ENCODE measurements at regions of chr11 and their contacts with region 1.

Region 1: DNA sequence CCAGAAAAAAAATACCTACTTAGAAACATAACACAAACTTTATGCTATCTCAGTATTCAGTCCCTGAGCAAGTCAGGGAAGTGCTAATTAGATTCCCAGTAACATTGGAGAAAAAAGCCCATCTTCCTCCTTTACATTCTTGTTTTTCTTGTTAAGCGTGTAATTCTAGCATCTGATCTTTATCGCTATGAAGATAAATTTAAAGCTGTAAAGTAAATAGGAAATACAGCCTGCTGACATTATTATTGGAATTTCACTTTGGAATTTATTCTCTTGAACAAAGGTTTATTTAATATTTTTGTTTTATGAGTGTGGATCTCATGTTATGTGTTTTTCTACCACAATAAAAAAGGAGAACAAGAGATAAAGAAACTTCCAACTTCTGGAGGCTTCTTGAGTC is 13.9 kb downstream of the ALKBH3 start:
- DNase-seq: no peak
- H3K4me3 ChIP-seq: no peak overlapping the region
- H3K4me3 Mint-ChIP-seq: no peak overlapping the region
- H3K27ac ChIP-seq: no peak overlapping the region
- H3K27ac Mint-ChIP-seq: no peak overlapping the region
- H3K4me1 ChIP-seq: no peaks in the 10 kb centered on the region
- H3K4me1 Mint-ChIP-seq: no peaks in the 10 kb centered on the region
- H3K27me3 ChIP-seq: no peaks in the 10 kb centered on the region
- H3K27me3 Mint-ChIP-seq: no peaks in the 10 kb centered on the region
- CTCF ChIP-seq: no peak

Region 2: DNA sequence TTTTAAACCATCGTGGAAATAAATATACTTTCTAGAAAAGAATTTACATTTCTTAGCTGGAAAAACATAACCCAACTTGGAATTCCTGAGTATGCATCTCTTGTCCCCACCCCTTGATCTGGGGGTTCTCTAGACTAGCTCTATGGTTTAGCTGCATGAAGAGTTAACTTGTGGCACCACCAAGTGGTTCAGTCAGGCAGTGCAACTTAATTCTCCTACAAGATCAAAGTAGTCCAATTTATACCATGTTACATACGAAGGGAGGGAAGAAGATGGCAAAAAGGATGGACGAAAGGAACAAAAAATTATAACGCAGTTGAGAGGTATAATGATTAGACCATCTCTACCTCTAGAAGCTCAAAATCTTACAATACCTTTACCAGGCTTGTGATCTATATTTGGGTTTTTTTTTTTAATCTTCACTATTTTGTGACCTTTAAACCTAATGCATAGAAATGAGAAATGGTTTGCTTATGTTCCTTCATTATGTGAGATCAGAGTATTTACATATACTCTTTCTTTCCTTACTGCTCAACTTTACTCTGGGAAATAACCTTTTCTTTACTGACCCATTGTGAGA is 42.4 kb before region 1 on chr11:
- intact Hi-C with region 1: no loop called
- DNase-seq: peak; percentile 30 to 57 (median 52)
- H3K4me3 ChIP-seq: no peak overlapping the region
- H3K4me3 Mint-ChIP-seq: no peak overlapping the region
- H3K27ac ChIP-seq: no peak overlapping the region
- H3K27ac Mint-ChIP-seq: no peak overlapping the region
- H3K4me1 ChIP-seq: no peaks in the 10 kb centered on the region
- H3K4me1 Mint-ChIP-seq: peaks cover 5% of the 10 kb centered on the region
- H3K27me3 ChIP-seq: no peaks in the 10 kb centered on the region
- H3K27me3 Mint-ChIP-seq: no peaks in the 10 kb centered on the region
- CTCF ChIP-seq: peak; percentile 89

Region 3: GRCh38 chr11:43944761-43945311 is 50.3 kb after region 1 on chr11:
- intact Hi-C with region 1: loop called in 1 of 2 experiments (anchors 5 kb)
- DNase-seq: peak; percentile 16 to 37 (median 21)
- H3K4me3 ChIP-seq: no peak overlapping the region
- H3K4me3 Mint-ChIP-seq: peak overlapping the region; percentile 39 to 94
- H3K27ac ChIP-seq: no peak overlapping the region
- H3K27ac Mint-ChIP-seq: no peak overlapping the region
- H3K4me1 ChIP-seq: peaks cover 15 to 34% of the 10 kb centered on the region in 2 donors
- H3K4me1 Mint-ChIP-seq: peaks cover 26% of the 10 kb centered on the region
- H3K27me3 ChIP-seq: peaks cover 31 to 43% of the 10 kb centered on the region in 2 donors
- H3K27me3 Mint-ChIP-seq: peaks cover 41 to 71% (median 68%) of the 10 kb centered on the region in 3 donors
- CTCF ChIP-seq: peak; percentile 70

Measured in CD14-positive monocyte (primary cell).